IMR-90 (cell line): ENCODE measurements at regions of chr4 and their contacts with region 1.

Region 1: DNA sequence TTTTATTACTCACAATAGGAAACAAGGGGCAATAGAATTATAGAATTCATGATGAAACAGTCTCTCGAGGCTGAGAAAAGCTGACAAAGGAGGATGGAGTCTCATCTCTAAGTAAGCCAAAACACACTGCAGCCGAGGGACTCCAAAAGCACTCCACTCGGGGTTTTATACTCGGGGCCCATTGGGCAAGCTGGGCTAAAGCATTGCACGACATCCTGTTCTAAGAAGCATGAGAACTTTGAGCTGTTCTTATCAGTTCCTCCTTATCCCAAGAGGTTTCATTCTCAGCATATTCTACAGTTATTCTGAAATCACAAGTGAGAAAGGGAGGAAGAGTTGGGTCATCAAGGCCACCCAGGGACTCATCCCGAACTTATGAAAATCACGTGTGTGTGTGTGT is 1475.5 kb downstream of the PCDH18 start:
- DNase-seq: no peak
- ATAC-seq: no peak
- H3K4me3 ChIP-seq: no peak overlapping the region
- H3K27ac ChIP-seq: no peak overlapping the region
- H3K4me1 ChIP-seq: no peaks in the 10 kb centered on the region
- H3K27me3 ChIP-seq: no peaks in the 10 kb centered on the region
- CTCF ChIP-seq: no peak
- POLR2A ChIP-seq: no peak
- RAD21 ChIP-seq: no peak

Region 2: GRCh38 chr4:135694066-135694465 is 362.7 kb before region 1 on chr4:
- CTCF ChIA-PET with region 1: no interaction called
- POLR2A ChIA-PET with region 1: no interaction called
- dilution Hi-C with region 1: no loop called
- in situ Hi-C with region 1: no loop called
- intact Hi-C with region 1: no loop called
- DNase-seq: no peak
- ATAC-seq: no peak
- H3K4me3 ChIP-seq: no peak overlapping the region
- H3K27ac ChIP-seq: no peak overlapping the region
- H3K4me1 ChIP-seq: no peaks in the 10 kb centered on the region
- H3K27me3 ChIP-seq: no peaks in the 10 kb centered on the region
- CTCF ChIP-seq: no peak
- POLR2A ChIP-seq: no peak
- RAD21 ChIP-seq: no peak

Region 3: GRCh38 chr4:136438645-136439044 is 381.9 kb after region 1 on chr4:
- CTCF ChIA-PET with region 1: no interaction called
- POLR2A ChIA-PET with region 1: no interaction called
- dilution Hi-C with region 1: no loop called
- in situ Hi-C with region 1: no loop called
- intact Hi-C with region 1: loop called (anchors 10 kb)
- DNase-seq: no peak
- ATAC-seq: no peak
- H3K4me3 ChIP-seq: no peak overlapping the region
- H3K27ac ChIP-seq: no peak overlapping the region
- H3K4me1 ChIP-seq: no peaks in the 10 kb centered on the region
- H3K27me3 ChIP-seq: no peaks in the 10 kb centered on the region
- CTCF ChIP-seq: no peak
- POLR2A ChIP-seq: no peak
- RAD21 ChIP-seq: no peak